WTC11 (cell line): ENCODE measurements at regions of chr4 and their contacts with region 1.

Region 1: GRCh38 chr4:129641179-129641578 is 545.2 kb downstream of the C4orf33 start:
- DNase-seq: peak; percentile 72
- ATAC-seq: peak; percentile 89
- H3K4me3 Mint-ChIP-seq: no peak overlapping the region
- H3K27ac Mint-ChIP-seq: no peak overlapping the region
- H3K4me1 Mint-ChIP-seq: peaks cover 8% of the 10 kb centered on the region; the same call in 1 of the 2 replicates
- H3K27me3 Mint-ChIP-seq: no peaks in the 10 kb centered on the region
- CTCF ChIP-seq: peak; percentile 73; the same call in 1 of the 2 replicates

Region 2: DNA sequence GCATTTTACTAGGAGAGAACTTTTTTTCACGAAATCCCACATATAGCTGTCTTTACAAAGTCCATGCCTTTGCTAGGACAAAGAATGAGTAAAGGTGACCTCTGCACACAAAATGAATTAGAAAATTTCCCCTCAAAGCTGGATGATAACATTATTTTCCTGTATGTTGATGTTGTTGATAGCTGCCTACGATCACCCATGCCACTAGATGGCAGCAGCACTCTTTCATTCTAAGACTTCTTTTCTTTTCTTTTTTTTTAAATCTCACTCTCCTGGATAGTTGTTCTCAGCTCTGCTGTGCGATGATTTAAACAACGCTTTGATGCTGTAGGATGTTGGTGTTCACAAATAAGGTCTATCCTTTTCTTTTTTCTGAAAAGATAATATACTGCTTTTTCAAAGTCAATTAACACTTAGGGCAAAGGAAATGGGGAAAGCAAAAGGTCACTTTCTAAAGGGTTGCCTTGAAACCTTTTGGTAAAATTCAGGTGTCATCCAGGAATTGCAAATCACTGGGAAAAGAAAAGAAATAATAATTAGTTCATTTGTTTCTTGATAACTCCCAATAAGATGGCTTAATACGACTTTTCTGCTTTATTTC is 278.4 kb before region 1 on chr4:
- CTCF ChIA-PET with region 1: interaction called, 14 read pairs
- POLR2A ChIA-PET with region 1: no interaction called
- DNase-seq: peak; percentile 54
- ATAC-seq: peak; percentile 80
- H3K4me3 Mint-ChIP-seq: no peak overlapping the region
- H3K27ac Mint-ChIP-seq: no peak overlapping the region
- H3K4me1 Mint-ChIP-seq: peaks cover 18% of the 10 kb centered on the region
- H3K27me3 Mint-ChIP-seq: no peaks in the 10 kb centered on the region
- CTCF ChIP-seq: peak; percentile 72

Region 3: GRCh38 chr4:129862461-129862860 is 221.3 kb after region 1 on chr4:
- CTCF ChIA-PET with region 1: no interaction called
- POLR2A ChIA-PET with region 1: no interaction called
- DNase-seq: no peak
- ATAC-seq: peak; percentile 85
- H3K4me3 Mint-ChIP-seq: no peak overlapping the region
- H3K27ac Mint-ChIP-seq: peak overlapping the region; percentile 41; the same call in 1 of the 2 replicates
- H3K4me1 Mint-ChIP-seq: peaks cover 21% of the 10 kb centered on the region
- H3K27me3 Mint-ChIP-seq: no peaks in the 10 kb centered on the region
- CTCF ChIP-seq: no peak